Activated CD4-positive, alpha-beta T cell treated with anti-CD3 and anti-CD28 coated beads for 36 hours (primary cell): ENCODE measurements at regions of chr14 and their contacts with region 1.

Region 1: DNA sequence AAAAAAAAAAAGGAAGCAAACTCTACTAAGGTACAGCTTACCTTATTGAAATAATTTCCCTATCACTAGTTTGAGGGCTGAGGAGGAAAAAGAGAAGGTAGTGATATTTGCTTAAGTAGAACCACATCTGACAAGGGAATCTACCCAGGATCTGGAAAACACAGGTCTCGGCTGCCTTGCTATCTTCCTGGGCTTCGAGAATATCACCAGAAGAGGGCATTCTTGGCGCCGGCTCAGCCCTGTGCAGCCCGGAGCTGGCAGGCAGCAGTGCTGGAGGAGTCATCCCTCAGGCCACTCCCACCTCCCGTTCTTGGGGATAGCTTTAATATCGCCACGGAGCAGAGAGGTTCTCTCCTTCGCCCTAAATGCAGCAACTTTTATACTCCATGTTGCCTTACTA is 1181.2 kb downstream of the VRK1 start:
- DNase-seq: peak; percentile 93
- ATAC-seq: peak; percentile 87
- H3K4me3 Mint-ChIP-seq: peak overlapping the region; percentile 94
- H3K27ac Mint-ChIP-seq: peak overlapping the region; percentile 95
- H3K4me1 Mint-ChIP-seq: peaks cover 63% of the 10 kb centered on the region
- H3K27me3 Mint-ChIP-seq: no peaks in the 10 kb centered on the region

Region 2: GRCh38 chr14:97724265-97724731 is 254.0 kb before region 1 on chr14:
- CTCF ChIA-PET with region 1: interaction called, 4 read pairs
- POLR2A ChIA-PET with region 1: no interaction called
- intact Hi-C with region 1: loop called (anchors 5 kb)
- DNase-seq: peak; percentile 63
- ATAC-seq: peak; percentile 93
- H3K4me3 Mint-ChIP-seq: peak overlapping the region; percentile 72
- H3K27ac Mint-ChIP-seq: peak overlapping the region; percentile 98
- H3K4me1 Mint-ChIP-seq: peaks cover 76% of the 10 kb centered on the region
- H3K27me3 Mint-ChIP-seq: no peaks in the 10 kb centered on the region

Region 3: GRCh38 chr14:98103705-98104104 is 125.4 kb after region 1 on chr14:
- CTCF ChIA-PET with region 1: no interaction called
- POLR2A ChIA-PET with region 1: no interaction called
- intact Hi-C with region 1: loop called (anchors 1 kb)
- DNase-seq: peak; percentile 27
- ATAC-seq: no peak
- H3K4me3 Mint-ChIP-seq: no peak overlapping the region
- H3K27ac Mint-ChIP-seq: no peak overlapping the region
- H3K4me1 Mint-ChIP-seq: peaks cover 52% of the 10 kb centered on the region
- H3K27me3 Mint-ChIP-seq: no peaks in the 10 kb centered on the region

Region 4: GRCh38 chr14:98227000-98227726 is 248.8 kb after region 1 on chr14:
- CTCF ChIA-PET with region 1: interaction called, 3 read pairs
- POLR2A ChIA-PET with region 1: no interaction called
- intact Hi-C with region 1: loop called (anchors 5 to 10 kb)
- DNase-seq: peak; percentile 75
- ATAC-seq: peak; percentile 70
- H3K4me3 Mint-ChIP-seq: peak overlapping the region; percentile 45
- H3K27ac Mint-ChIP-seq: peak overlapping the region; percentile 95
- H3K4me1 Mint-ChIP-seq: peaks cover 88% of the 10 kb centered on the region
- H3K27me3 Mint-ChIP-seq: no peaks in the 10 kb centered on the region

Region 5: DNA sequence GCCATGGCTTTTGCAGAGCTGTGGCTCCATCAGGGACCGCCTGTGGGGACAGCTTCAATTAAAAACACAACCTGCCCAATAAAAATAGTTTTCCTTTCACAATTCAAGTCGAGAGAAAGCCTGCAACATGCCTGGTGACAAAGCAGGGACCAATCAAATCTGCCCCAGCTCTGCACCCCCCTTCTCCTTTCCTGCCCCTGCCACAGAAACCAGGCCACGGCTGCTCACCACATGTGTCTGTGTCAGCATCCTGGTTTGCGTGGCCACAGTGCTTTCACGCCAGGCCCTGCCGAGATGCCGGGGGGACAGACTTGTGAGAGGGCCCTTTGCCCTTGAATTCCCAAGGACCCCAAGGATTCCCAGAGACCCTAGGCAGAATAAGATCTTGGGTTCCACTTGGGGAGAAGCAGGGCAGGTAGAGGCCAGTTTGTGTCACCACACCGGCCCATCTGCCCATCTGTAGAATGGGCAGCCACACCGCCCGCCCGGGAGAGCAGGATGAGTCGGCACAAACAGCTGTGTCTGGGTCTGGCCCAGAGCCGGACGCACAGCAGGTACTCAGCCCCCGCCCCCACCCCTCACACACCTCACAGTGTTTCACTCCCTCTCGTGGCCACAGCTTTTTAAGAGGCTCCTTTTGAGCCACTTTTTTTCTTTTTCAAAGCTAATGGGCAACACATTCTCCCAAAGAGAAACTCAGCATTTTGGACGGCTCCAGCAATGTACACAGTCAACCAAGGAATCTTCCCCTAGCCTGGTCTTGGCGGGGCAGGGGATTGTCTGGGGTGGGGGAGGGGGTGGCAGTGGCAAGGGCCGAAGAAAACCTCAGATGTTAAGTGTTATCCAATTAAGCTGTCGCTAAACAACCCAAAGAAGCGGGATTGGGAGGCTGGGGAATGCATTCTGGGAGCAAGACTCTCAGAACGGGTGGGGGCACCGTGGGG is 1252.1 kb after region 1 on chr14:
- CTCF ChIA-PET with region 1: no interaction called
- POLR2A ChIA-PET with region 1: no interaction called
- intact Hi-C with region 1: loop called in 1 of 2 experiments (anchors 10 kb)
- DNase-seq: peak; percentile 91
- ATAC-seq: peak; percentile 55
- H3K4me3 Mint-ChIP-seq: peak overlapping the region; percentile 67
- H3K27ac Mint-ChIP-seq: peak overlapping the region; percentile 88
- H3K4me1 Mint-ChIP-seq: peaks cover 93% of the 10 kb centered on the region
- H3K27me3 Mint-ChIP-seq: no peaks in the 10 kb centered on the region